Activated naive CD4-positive, alpha-beta T cell treated with anti-CD3 and anti-CD28 coated beads, Interleukin-2, amount 10 ng/mL, durations not matched to agents 7 days and 5 days (primary cell): ENCODE measurements at regions of chr9 and their contacts with region 1.

Region 1: GRCh38 chr9:131056781-131057506 is 39.4 kb upstream of the AIF1L start:
- DNase-seq: no peak
- H3K4me3 Mint-ChIP-seq: no peak overlapping the region
- H3K27ac Mint-ChIP-seq: no peak overlapping the region
- H3K4me1 Mint-ChIP-seq: no peaks in the 10 kb centered on the region
- H3K27me3 Mint-ChIP-seq: no peaks in the 10 kb centered on the region

Region 2: DNA sequence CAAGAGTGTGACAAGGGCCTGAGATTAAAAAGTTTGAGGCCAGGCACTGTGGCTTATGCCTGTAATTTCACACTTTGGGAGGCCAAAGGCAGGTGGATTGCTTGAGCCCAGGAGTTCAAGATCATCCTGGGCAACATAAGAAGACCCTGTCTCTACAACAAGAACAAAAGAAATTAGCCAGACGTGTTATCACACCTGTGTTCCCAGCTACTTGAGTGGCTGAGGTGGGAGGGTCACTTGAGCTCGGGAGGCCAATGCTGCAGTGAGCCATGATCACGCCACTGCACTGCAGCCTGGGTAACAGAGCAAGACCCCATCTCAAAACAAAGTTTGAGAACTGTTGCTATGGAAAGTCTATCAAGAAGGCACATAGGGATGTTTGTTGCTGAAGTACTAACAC is 338.4 kb before region 1 on chr9:
- CTCF ChIA-PET with region 1: no interaction called
- DNase-seq: no peak
- H3K4me3 Mint-ChIP-seq: no peak overlapping the region
- H3K27ac Mint-ChIP-seq: no peak overlapping the region
- H3K4me1 Mint-ChIP-seq: peaks cover 31% of the 10 kb centered on the region
- H3K27me3 Mint-ChIP-seq: no peaks in the 10 kb centered on the region

Region 3: DNA sequence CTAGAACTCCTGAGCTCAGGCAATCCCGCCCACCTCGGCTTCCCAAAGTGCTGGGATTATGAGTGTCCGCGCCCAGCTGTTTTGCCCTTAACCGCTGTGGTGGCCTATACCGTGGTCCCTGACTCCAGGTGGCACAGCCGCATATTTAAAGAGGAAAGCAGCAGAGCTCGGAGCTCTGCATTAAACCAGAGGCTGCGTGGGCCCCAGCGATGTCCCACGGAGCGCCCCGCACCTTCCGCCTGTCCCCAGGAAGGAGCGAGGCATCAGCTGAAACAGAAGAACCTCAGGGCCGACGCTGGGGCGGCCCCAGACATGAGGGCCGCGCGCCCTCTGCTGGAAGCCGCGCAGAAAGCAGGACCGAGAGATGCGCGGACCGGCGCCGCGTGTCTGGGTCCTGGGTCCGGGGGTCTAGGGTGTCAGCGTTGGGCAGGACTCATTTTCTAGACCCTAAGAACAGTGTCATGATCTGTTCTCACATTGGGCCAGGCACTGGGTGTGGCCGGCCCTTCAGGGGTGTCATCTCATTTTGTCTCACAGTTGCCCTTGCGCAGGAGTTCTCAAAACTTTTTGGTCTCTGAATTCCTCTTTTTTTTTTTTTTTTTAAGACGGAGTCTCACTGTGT is 10.3 kb before region 1 on chr9:
- CTCF ChIA-PET with region 1: interaction called, 24 read pairs
- DNase-seq: peak; percentile 78
- H3K4me3 Mint-ChIP-seq: no peak overlapping the region
- H3K27ac Mint-ChIP-seq: no peak overlapping the region
- H3K4me1 Mint-ChIP-seq: peaks cover 13% of the 10 kb centered on the region
- H3K27me3 Mint-ChIP-seq: peaks cover 28% of the 10 kb centered on the region

Region 4: GRCh38 chr9:131334629-131335367 is 277.9 kb after region 1 on chr9:
- CTCF ChIA-PET with region 1: interaction called, 37 read pairs
- DNase-seq: no peak
- H3K4me3 Mint-ChIP-seq: no peak overlapping the region
- H3K27ac Mint-ChIP-seq: no peak overlapping the region
- H3K4me1 Mint-ChIP-seq: peaks cover 4% of the 10 kb centered on the region
- H3K27me3 Mint-ChIP-seq: peaks cover 43% of the 10 kb centered on the region